Left ventricle myocardium superior (tissue), 1 donor: ENCODE measurements at regions of chr4 and their contacts with region 1.

Region 1: GRCh38 chr4:13548984-13549546 is 4.8 kb upstream of the NKX3-2 start:
- DNase-seq: peak; percentile 90
- ATAC-seq: peak; percentile 78

Region 2: DNA sequence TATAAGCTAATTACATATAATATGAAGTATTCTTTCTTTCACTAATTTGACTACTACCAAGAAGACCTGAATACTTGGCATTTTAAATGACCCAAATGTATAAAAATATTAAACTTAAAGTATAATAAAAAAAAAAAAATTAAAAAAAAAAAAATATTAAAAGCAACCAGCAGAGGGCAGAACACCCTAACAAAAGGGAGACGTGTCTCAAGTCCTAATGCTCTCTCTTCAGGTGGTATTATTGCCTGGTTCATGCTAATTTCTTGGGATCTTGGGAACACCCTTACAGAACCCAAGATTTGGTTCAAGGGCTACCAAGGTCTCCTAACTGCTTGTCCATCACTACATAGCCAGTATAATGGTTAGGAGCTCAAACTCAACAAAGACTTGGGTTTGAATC is 819.7 kb before region 1 on chr4:
- intact Hi-C with region 1: loop called (anchors 5 kb)
- DNase-seq: no peak
- ATAC-seq: no peak

Region 3: GRCh38 chr4:12852338-12853307 is 696.4 kb before region 1 on chr4:
- intact Hi-C with region 1: loop called (anchors 2 kb)
- DNase-seq: no peak
- ATAC-seq: peak; percentile 74

Region 4: GRCh38 chr4:13151194-13151593 is 397.9 kb before region 1 on chr4:
- intact Hi-C with region 1: no loop called
- DNase-seq: no peak
- ATAC-seq: no peak